ENCODE measurements at regions of chr2 and their contacts with region 1.

Region 1: DNA sequence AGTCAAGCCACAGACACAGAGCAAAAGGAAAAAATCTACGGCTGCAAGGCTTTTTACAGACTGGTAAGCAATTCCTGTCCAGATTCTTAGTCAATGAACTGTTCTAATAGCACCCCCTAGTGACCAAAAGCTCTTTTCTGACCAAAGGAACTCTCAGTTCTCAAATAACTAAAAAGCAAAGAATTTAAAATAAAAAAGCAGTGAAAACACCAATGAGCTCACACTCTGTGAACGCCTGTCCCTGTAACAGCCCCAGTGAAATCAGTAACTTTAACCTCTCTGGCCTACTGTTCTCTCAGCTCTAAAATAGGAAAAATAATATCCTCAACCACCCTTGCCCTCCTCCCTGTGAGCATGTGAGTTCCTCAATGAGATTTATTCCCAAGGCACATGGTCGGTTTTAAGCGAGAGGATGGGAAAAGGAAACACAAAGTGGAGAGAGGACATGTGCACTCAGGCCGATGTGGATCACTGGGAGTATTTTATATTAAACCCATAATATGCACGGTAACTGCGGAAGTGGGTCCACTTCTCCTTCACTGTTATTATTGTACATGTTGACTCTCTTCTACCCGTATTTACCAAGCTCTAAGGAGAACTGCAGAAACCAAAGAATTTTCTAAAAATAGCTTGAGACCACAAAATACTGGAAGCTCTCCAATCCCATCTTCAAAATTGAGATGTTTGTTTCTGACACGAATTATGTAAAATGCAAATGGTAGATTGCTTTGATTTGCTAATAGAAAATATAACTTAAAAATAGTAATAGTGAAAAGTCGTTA is 128.5 kb downstream of the STK39 start:
- DNase-seq: peak; percentile 5
- H3K4me3 Mint-ChIP-seq: no peak overlapping the region
- H3K27ac Mint-ChIP-seq: no peak overlapping the region
- H3K4me1 Mint-ChIP-seq: no peaks in the 10 kb centered on the region
- H3K27me3 Mint-ChIP-seq: no peaks in the 10 kb centered on the region

Region 2: GRCh38 chr2:167331636-167332232 is 787.2 kb before region 1 on chr2:
- intact Hi-C with region 1: loop called (anchors 5 kb)
- DNase-seq: no peak
- H3K4me3 Mint-ChIP-seq: no peak overlapping the region
- H3K27ac Mint-ChIP-seq: no peak overlapping the region
- H3K4me1 Mint-ChIP-seq: no peaks in the 10 kb centered on the region
- H3K27me3 Mint-ChIP-seq: no peaks in the 10 kb centered on the region

Region 3: GRCh38 chr2:167692191-167692590 is 426.7 kb before region 1 on chr2:
- intact Hi-C with region 1: loop called (anchors 10 kb)
- DNase-seq: no peak
- H3K4me3 Mint-ChIP-seq: no peak overlapping the region
- H3K27ac Mint-ChIP-seq: no peak overlapping the region
- H3K4me1 Mint-ChIP-seq: no peaks in the 10 kb centered on the region
- H3K27me3 Mint-ChIP-seq: no peaks in the 10 kb centered on the region

Region 4: GRCh38 chr2:167776359-167776758 is 342.6 kb before region 1 on chr2:
- intact Hi-C with region 1: loop called (anchors 10 kb)
- DNase-seq: no peak
- H3K4me3 Mint-ChIP-seq: no peak overlapping the region
- H3K27ac Mint-ChIP-seq: no peak overlapping the region
- H3K4me1 Mint-ChIP-seq: no peaks in the 10 kb centered on the region
- H3K27me3 Mint-ChIP-seq: peaks cover 1% of the 10 kb centered on the region

Region 5: GRCh38 chr2:167964650-167965413 is 154.1 kb before region 1 on chr2:
- intact Hi-C with region 1: loop called (anchors 1 kb)
- DNase-seq: no peak
- H3K4me3 Mint-ChIP-seq: no peak overlapping the region
- H3K27ac Mint-ChIP-seq: no peak overlapping the region
- H3K4me1 Mint-ChIP-seq: peaks cover 5% of the 10 kb centered on the region
- H3K27me3 Mint-ChIP-seq: no peaks in the 10 kb centered on the region

Region 6: GRCh38 chr2:168060986-168061750 is 57.8 kb before region 1 on chr2:
- intact Hi-C with region 1: no loop called
- DNase-seq: no peak
- H3K4me3 Mint-ChIP-seq: no peak overlapping the region
- H3K27ac Mint-ChIP-seq: no peak overlapping the region
- H3K4me1 Mint-ChIP-seq: no peaks in the 10 kb centered on the region
- H3K27me3 Mint-ChIP-seq: no peaks in the 10 kb centered on the region

Measured in activated T-helper 1 cell treated with anti-CD3 and anti-CD28 coated beads, Interleukin-12 subunit alpha, Interleukin-12 subunit beta, Interleukin-2, Interleukin-4 antibody, amounts not matched to agents 30 ng/mL and 10 ng/mL and 1 ng/mL, durations not matched to agents 14 hours and 24 hours and 36 hours (primary cell).